ENCODE measurements at regions of chr2 and their contacts with region 1.

Region 1: DNA sequence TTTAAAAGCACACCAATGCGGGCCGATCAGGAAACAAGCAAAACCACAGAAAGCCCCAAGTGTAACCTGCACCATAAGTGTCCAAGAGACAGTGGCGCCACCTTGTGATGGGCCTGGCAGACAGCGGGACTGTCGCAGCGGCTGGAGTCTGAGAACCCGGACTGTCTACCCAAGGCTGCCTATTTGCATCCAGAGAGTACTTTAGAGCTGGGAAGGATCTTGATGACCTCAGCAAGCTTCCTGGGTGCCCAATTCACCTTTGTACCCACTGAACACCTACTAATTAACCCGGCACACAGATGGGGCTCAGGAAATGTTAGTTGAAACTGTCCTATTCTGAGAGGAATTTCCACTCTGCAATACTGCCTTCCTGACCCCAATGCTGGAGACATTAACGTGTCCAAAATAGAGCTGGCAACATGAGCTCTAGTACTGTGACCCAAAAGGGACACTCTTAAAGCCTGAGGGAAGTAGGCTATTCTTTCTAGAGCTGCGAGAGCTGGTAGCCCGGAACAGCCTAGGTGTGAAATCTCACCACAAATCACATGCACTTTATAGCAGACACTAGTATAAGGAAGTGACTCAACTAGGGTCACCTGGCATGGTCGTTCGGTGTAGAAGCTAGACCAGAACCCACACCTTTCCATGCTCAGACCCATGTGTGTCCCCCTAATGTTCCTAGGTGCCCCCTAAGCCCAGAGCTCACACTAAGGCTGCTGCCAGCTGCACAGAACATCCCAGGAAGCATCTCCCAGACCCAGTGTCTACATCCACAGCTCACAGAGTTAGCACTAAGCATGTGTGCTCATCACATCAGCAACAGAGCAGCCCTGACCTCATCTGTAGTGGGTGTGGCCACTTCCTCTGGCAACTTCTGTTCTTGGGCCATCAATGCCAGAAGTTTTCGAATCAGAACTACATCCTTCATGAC is 25.4 kb downstream of the POLR1A start:
- DNase-seq: peak; percentile 75 to 79
- H3K4me3 ChIP-seq: no peak overlapping the region
- H3K27ac ChIP-seq: no peak overlapping the region
- H3K4me1 ChIP-seq: no peaks in the 10 kb centered on the region
- H3K27me3 ChIP-seq: no peaks in the 10 kb centered on the region
- CTCF ChIP-seq: peak; percentile 72 to 85 (median 80)
- POLR2A ChIP-seq: no peak

Region 2: DNA sequence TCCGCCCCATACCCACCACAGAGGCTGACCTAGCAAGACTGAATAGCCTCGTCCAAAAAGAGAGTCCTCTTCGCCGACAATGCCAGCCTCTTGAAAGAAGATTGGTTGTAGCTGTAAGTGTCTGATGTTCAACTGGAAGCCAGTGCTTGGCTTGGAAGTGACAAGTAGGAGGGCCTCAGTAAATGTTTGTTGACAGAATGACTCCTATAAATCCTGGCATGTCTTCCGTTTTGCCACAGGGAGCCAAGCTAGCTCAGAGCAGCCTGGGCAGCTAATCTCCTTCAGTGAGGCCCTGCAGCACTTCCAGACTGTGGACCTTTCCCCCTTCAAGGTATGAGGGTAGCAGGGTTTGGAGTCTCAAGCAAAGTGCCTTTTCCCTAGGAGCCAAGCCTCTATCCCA is 710.7 kb before region 1 on chr2:
- intact Hi-C with region 1: no loop called
- DNase-seq: no peak
- H3K4me3 ChIP-seq: no peak overlapping the region
- H3K27ac ChIP-seq: no peak overlapping the region
- H3K4me1 ChIP-seq: no peaks in the 10 kb centered on the region
- H3K27me3 ChIP-seq: no peaks in the 10 kb centered on the region
- CTCF ChIP-seq: no peak
- POLR2A ChIP-seq: no peak

Region 3: DNA sequence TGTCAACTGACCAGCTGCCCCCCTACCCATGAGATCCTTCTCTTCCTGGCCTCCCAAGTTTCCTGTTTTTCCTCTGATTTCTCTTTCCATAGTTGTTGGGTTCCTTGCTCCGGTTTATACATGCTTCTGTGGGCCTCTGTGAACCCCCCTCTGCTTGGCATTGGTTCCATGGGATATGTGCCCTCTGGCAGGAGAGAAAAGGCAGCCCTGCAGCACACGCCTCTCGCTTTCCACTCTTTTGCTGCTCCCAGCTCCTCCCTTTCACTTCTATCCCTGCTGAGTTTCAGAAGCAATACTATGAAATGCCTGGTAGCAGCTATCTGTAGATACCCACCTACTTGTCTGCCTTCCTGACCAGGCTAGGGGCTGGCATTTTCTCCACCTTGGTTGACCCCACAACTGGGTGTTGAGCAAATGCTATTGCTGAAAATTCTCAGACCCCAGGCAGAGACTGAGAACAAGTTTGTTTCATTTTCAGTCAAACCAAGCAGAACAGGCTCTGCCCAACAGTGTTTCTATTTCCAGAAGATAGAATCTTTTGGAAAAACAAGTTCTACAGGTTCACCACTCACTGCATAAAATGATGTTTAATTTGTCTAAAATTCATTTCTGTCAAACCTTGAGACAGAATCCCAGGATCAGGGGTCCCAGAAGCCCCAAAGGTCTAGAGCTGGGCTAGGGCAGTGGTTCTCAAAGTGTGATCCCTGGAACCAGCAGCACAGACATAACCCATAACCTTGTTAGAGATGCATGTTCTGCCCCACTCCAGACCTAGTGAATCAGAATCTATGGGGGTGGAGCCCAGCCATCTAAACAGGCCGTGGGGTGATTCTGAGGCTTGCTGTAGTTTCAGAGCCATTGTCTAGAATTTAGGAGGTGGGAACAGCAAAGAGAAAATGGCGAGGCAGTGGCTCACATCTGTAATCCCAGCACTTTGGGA is 683.4 kb before region 1 on chr2:
- intact Hi-C with region 1: no loop called
- DNase-seq: no peak
- H3K4me3 ChIP-seq: no peak overlapping the region
- H3K27ac ChIP-seq: no peak overlapping the region
- H3K4me1 ChIP-seq: peaks cover 0 to 3% of the 10 kb centered on the region in 2 donors
- H3K27me3 ChIP-seq: no peaks in the 10 kb centered on the region
- CTCF ChIP-seq: no peak
- POLR2A ChIP-seq: no peak

Region 4: DNA sequence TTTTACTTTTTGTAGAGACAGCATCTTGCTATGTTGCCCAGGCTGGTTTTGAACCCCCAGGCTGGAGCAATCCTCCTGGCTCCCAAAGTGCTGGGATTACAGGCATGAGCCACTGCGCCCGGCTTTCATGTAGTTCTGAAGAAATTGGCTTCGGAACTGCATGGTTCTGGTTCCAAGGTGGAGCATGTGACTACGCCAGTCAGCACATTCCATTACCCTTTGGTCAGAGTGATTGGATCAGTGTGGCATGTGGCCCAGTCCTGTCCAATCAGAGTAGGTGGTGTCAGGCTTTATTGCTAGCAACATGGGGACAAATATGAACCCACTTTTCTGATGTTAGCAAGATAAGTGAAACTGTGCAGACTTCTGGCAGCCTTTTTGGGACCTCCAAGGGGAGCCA is 342.8 kb before region 1 on chr2:
- intact Hi-C with region 1: loop called (anchors 10 kb)
- DNase-seq: peak; percentile 89 to 93
- H3K4me3 ChIP-seq: no peak overlapping the region
- H3K27ac ChIP-seq: peak overlapping the region; percentile 93 to 96
- H3K4me1 ChIP-seq: peaks cover 21 to 24% of the 10 kb centered on the region in 2 donors
- H3K27me3 ChIP-seq: no peaks in the 10 kb centered on the region
- CTCF ChIP-seq: no peak
- POLR2A ChIP-seq: no peak

Region 5: DNA sequence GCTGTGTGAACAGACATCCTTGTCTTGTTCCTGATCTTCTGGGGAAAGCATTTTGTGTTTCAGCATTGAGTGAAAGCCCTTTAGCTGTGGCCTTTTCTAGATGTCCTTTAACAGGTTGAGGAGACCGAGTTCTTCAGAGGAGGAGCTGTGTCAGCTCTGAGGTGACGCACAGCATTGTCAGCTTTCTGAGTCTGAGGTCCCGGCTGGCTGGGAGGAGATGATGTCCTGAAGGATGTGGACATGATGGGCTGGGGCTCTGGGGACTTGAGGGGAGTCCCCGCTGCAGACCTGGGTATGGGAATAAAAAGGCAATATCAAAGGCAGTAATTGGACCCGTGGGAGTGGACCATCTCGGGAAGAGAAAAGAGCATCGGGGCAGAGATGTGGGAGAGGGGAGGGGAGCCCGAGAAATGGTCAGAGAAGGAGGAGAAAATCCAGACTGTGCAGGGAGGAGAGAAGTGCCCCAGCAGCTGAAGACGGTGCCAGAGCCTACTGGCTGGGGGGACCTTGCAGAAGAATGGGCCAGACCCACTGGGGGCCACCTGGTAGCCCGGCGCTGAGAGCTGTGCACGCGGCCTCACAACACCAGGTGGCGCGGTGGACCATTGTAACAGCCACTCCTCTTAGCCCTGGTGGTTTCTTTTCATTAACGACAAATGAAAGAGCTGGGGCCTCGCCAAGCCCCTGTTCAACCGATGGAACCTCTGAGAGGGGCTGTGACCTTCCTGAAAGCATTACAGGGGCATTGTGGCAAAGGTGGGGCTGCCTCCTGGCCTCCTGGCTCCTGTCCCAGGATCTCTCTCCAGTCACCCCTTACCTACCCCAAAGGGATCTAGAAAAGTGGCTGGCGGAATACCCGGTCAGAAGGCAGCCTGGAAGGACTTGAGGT is 253.0 kb before region 1 on chr2:
- intact Hi-C with region 1: loop called (anchors 2 kb)
- DNase-seq: peak; percentile 81 to 83
- H3K4me3 ChIP-seq: peak overlapping the region in 1 of 2 donors; percentile 22
- H3K27ac ChIP-seq: peak overlapping the region in 1 of 2 donors; percentile 43
- H3K4me1 ChIP-seq: no peaks in the 10 kb centered on the region
- H3K27me3 ChIP-seq: no peaks in the 10 kb centered on the region
- CTCF ChIP-seq: peak; percentile 95 to 97 (median 96)
- POLR2A ChIP-seq: no peak

Region 6: GRCh38 chr2:85905187-85905666 is 175.0 kb before region 1 on chr2:
- intact Hi-C with region 1: loop called (anchors 10 kb)
- DNase-seq: peak; percentile 64 to 73
- H3K4me3 ChIP-seq: no peak overlapping the region
- H3K27ac ChIP-seq: peak overlapping the region; percentile 69 to 83
- H3K4me1 ChIP-seq: peaks cover 4 to 10% of the 10 kb centered on the region in 2 donors
- H3K27me3 ChIP-seq: no peaks in the 10 kb centered on the region
- CTCF ChIP-seq: no peak
- POLR2A ChIP-seq: no peak

Region 7: DNA sequence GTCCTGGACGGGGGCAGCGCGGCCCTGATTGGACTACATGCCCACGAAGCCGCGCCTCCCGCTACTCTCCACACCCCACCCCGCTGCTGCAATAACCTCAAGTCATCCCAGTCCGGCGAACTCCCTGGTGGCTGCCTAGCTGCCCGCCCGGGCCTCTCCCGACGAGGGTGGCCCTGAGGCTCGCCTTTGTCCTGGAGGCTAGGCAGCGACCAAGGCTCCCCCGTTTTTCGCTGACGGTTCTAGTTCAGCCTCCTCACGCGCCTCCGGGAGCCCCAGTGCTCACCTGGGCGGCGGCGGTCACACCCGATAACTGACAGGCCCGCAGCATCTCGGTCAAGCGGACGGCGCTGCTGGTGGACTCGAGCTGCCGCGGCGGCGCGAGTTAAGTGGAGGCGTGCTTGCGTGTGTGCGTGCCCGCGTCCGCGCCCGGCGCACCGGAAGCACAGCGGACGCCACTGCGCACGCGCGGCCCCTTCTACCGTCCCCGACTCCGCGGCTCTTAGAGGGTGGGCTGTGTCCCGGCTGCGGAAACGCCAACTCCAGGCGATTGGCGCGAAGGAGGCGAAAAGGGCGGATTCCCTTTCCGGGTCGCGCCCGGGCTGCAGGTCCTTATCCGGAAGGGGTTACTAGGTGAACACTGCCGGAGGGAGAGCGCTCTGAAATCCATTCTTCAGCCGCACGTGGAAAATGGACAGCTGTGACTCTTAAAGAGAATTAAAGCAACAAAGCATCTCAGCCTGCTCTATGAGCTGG is 115.0 kb after region 1 on chr2 and contains the start of gene IMMT:
- intact Hi-C with region 1: no loop called
- DNase-seq: peak; percentile 95 to 97
- H3K4me3 ChIP-seq: peak within 1 kb of the TSS; percentile 94 to 97
- H3K27ac ChIP-seq: peak within 1 kb of the TSS; percentile 98 to 99
- H3K4me1 ChIP-seq: peaks cover 0 to 7% of the 10 kb centered on the region in 2 donors
- H3K27me3 ChIP-seq: no peaks in the 10 kb centered on the region
- CTCF ChIP-seq: peak in 2 of 4 experiments; percentile 13 to 29
- POLR2A ChIP-seq: peak in 1 of 2 donors; percentile 90
- total RNA-seq, gene IMMT: 9.7 to 63.0 (median 36.2) TPM

Measured in uterus (tissue), 4 donors.